Activated CD4-positive, alpha-beta T cell treated with anti-CD3 and anti-CD28 coated beads, Interleukin-2, amount 10 ng/mL, durations not matched to agents 24 days and 14 days (primary cell): ENCODE measurements at regions of chr6 and their contacts with region 1.

Region 1: DNA sequence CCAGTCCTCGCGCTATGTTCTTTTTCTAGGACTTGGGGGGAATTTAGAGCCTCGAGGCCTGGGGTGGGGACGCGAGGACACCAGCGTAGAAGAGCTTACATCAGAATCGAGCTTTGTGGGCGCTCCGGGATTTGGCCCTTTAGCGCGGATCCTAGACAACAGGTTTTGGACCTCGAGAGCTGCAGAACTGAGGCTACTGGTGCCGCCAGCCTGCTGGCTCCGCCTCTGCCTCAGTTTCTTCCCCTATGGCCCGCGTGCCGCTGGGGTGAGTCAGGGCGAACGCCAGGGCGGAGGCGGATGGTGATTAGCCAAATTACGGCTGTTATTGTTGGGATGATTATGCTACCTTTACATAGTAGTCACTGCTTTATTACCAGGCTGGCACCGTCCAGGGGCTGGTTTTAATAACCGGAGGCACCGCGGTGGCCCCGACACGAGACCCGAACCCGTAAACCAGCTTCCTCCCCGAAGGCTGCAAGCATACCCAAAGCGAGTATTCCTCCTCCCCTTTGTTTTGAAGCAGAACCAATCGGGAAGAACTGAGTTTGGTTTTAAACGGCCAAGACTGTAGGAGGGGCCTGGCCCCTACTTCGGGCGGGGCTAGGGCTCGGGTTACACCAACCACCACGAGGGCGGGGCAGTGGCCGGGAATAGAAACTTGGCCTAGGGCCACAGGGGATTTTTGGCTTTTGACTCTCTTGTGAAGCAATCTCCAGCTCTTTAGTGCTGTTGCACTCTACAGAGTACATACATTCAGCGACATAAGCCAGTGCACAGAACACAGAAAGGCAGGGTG is 639 bp upstream of the GTPBP2 start:
- DNase-seq: peak; percentile 98
- H3K4me3 Mint-ChIP-seq: peak overlapping the region; percentile 99
- H3K27ac Mint-ChIP-seq: peak overlapping the region; percentile 99
- H3K4me1 Mint-ChIP-seq: peaks cover 38% of the 10 kb centered on the region
- H3K27me3 Mint-ChIP-seq: no peaks in the 10 kb centered on the region

Region 2: DNA sequence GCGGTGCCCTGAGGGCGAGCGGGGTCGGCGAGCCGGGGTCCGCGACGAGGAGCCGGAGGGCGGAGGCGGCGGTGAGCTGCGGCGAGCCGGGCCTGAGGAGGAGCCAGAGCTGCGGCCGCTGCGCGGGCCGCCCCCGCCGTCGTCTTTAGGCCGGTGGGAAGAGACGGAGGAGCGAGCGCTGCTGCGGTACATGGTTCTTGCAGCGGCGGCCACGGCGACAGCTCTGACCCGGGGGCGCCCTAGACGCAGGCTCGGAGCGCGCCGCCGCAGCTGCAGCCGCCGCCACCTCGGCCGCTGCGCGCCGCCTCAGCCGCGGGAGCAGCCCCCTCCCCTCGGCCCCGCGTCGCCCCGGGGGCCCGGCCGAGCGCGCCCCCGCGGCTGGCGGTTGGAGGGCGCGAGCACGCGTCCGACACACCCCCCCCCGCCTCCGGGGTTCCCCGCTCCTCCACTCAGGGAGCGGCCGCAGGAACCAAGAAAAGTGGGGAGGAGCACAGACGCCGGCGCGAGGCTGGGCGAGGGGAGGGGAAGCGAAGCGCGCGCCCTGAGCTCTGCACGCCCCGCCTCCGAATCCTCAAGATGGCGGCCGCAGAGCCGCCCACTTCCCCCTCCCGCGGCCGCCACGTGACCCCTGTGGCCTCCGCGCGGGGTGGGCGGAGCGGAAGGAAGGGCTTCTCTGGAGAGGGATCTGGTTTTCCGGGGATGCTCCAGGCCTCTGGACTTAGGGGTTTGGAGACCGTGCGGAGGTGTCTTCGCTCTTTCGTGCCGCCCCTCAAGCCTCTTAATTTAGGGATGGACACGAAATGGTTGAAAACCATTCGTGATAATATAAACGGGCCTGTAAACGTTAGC is 260.3 kb before region 1 on chr6 and contains the start of gene ZNF318:
- intact Hi-C with region 1: loop called (anchors 1 kb)
- DNase-seq: peak; percentile 98
- H3K4me3 Mint-ChIP-seq: peak within 1 kb of the TSS; percentile 85
- H3K27ac Mint-ChIP-seq: peak within 1 kb of the TSS; percentile 94
- H3K4me1 Mint-ChIP-seq: peaks cover 35% of the 10 kb centered on the region
- H3K27me3 Mint-ChIP-seq: peaks cover 1% of the 10 kb centered on the region
- total RNA-seq, gene ZNF318: 9.3 and 10.3 TPM in 2 replicates

Region 3: GRCh38 chr6:43575772-43576551 is 53.7 kb before region 1 on chr6 and contains the starts of genes POLH and XPO5:
- intact Hi-C with region 1: loop called (anchors 2 kb)
- DNase-seq: peak; percentile 98
- H3K4me3 Mint-ChIP-seq: peak within 1 kb of the TSS; percentile 95
- H3K27ac Mint-ChIP-seq: peak within 1 kb of the TSS; percentile 90
- H3K4me1 Mint-ChIP-seq: peaks cover 46% of the 10 kb centered on the region
- H3K27me3 Mint-ChIP-seq: no peaks in the 10 kb centered on the region
- total RNA-seq, gene POLH: 34.2 and 37.9 TPM in 2 replicates
- total RNA-seq, gene XPO5: 143 and 145 TPM in 2 replicates

Region 4: GRCh38 chr6:43687437-43688347 is 58.0 kb after region 1 on chr6 and contains the start of gene MRPS18A:
- intact Hi-C with region 1: loop called (anchors 2 kb)
- DNase-seq: peak; percentile 95
- H3K4me3 Mint-ChIP-seq: peak within 1 kb of the TSS; percentile 93
- H3K27ac Mint-ChIP-seq: peak within 1 kb of the TSS; percentile 84
- H3K4me1 Mint-ChIP-seq: peaks cover 36% of the 10 kb centered on the region
- H3K27me3 Mint-ChIP-seq: peaks cover 2% of the 10 kb centered on the region
- total RNA-seq, gene MRPS18A: 47.4 and 50.1 TPM in 2 replicates

Region 5: DNA sequence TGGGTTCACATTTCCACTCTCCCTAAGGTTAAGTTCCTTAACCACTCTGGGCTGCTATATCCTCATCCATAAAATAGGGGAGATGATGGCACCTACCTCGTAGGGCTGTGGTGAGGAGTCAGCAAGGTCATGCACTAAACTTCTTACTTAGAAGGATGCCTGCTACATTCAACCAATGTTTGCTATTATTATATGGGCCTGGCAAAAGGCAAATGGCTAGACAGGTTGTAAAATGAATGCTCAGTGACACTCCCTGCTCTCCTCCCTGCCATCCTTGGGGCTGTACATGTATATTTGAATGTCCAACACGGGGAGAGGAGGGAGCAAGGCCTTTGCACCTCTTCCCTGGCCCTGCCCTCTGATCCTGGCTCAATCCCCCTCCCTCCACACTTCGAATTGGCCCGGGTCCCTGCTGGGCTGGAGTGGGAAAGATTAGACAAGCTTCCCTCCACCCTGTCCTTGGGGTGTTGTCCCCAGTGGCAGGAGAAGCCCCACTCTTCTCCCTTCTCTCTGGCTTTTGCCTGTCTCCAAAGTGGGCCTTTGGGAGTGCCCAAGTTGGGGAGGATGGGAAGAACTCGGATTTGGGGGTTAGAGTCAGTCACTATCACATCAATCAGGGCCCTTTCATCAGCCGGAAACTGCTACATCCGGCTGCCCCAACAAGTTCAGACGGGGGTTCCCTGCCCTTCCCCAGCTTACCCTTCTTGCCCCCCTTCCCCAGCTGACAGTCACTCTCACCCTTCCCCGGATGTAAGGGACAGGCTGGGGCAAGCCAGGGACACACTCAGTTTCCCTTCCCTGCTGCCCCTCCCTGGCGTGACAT is 104.0 kb after region 1 on chr6:
- intact Hi-C with region 1: no loop called
- DNase-seq: peak; percentile 73
- H3K4me3 Mint-ChIP-seq: no peak overlapping the region
- H3K27ac Mint-ChIP-seq: peak overlapping the region; percentile 74
- H3K4me1 Mint-ChIP-seq: peaks cover 16% of the 10 kb centered on the region
- H3K27me3 Mint-ChIP-seq: peaks cover 2% of the 10 kb centered on the region